ENCODE measurements at regions of chr3 and their contacts with region 1.

Region 1: DNA sequence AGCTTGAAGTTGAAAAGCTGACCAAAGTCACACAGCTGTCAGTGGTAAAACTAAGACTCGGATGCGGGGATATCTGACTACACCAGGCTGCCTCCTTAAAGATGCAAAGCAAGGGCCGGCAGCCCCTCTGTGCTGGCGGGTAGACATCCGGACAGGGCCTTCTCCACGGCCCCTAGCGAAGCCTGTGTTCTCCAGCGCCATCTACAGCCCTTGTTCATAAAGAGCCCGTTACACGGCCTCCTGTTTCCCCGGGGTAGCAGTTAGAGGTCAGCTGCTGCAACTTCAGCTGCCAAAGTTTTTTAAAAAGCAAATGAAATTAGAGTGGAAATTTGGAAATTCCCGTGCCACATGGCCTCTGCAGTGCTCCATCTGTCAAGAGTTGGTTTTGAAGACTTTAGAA is 383.0 kb downstream of the TBL1XR1 start:
- DNase-seq: no peak

Region 2: DNA sequence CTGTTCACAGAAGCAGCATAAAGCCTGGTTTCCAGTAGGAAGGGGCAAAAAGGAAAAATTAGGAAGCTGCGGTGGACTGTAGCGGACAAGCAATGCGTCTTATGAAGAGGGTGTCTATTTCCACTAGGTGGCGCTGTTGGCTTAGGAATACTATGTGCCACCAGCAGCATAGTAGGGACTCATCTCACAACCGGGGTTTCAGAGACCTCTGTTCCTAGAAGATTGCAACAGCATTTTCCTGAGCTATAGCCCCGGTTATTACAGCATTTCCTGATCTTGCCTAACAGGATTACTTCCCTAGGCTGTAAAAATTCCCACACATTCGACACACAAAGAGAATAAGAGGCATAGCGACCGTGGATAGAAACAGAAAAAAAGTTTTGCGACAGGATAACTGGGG is 300.0 kb before region 1 on chr3:
- intact Hi-C with region 1: loop called (anchors 5 kb)
- DNase-seq: no peak

Region 3: DNA sequence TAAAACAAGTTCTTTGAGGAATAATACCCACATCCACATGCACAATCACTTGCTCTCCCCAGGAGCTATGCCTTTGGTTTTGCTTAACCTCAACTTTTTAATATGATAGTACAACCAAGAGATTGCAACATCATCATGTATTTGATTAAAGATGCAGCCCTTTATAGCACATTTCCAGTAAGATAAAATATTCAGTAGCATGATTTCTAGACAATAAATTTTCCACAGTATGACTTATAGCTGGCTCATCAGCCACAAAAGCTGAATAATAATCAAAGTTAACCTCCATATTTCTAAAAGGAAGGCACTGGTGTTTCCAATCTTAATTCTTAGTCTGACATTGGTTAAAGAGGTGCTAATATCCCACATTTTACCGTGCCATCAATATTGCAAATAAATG is 239.5 kb before region 1 on chr3:
- intact Hi-C with region 1: no loop called
- DNase-seq: no peak

Measured in cardiac septum (tissue), 1 donor.